PC-9 (cell line): ENCODE measurements at regions of chr4 and their contacts with region 1.

Region 1: GRCh38 chr4:13797061-13797460 is 169.5 kb upstream of the BOD1L1 start:
- DNase-seq: no peak
- H3K4me3 ChIP-seq: no peak overlapping the region
- H3K27ac ChIP-seq: no peak overlapping the region
- H3K4me1 ChIP-seq: no peaks in the 10 kb centered on the region
- H3K27me3 ChIP-seq: no peaks in the 10 kb centered on the region
- CTCF ChIP-seq: no peak

Region 2: GRCh38 chr4:13611283-13611842 is 185.7 kb before region 1 on chr4:
- CTCF ChIA-PET with region 1: no interaction called
- POLR2A ChIA-PET with region 1: no interaction called
- intact Hi-C with region 1: no loop called
- DNase-seq: no peak
- H3K4me3 ChIP-seq: no peak overlapping the region
- H3K27ac ChIP-seq: no peak overlapping the region
- H3K4me1 ChIP-seq: no peaks in the 10 kb centered on the region
- H3K27me3 ChIP-seq: no peaks in the 10 kb centered on the region
- CTCF ChIP-seq: no peak

Region 3: DNA sequence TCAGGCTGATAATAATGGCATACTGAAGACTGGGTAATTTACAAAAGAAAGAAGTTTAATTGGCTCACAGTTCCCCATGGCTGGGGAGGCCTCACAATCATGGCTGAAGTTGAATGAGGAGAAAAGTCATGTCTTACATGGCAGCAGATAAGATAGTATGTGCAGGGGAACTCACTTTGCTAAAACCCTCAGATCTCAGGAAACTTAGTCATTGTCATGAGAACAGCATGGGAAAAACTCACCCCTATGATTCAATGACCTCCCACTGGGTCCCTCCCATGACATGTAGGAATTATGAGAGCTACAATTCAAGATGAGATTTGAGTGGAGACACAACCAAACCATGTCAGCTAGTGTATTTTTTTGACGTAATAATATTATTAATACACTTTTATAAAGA is 19.7 kb before region 1 on chr4:
- CTCF ChIA-PET with region 1: no interaction called
- POLR2A ChIA-PET with region 1: interaction called, 12 read pairs
- intact Hi-C with region 1: no loop called
- DNase-seq: no peak
- H3K4me3 ChIP-seq: no peak overlapping the region
- H3K27ac ChIP-seq: no peak overlapping the region
- H3K4me1 ChIP-seq: no peaks in the 10 kb centered on the region
- H3K27me3 ChIP-seq: no peaks in the 10 kb centered on the region
- CTCF ChIP-seq: no peak